Heart left ventricle (tissue), 16 donors: ENCODE measurements at regions of chr6 and their contacts with region 1.

Region 1: DNA sequence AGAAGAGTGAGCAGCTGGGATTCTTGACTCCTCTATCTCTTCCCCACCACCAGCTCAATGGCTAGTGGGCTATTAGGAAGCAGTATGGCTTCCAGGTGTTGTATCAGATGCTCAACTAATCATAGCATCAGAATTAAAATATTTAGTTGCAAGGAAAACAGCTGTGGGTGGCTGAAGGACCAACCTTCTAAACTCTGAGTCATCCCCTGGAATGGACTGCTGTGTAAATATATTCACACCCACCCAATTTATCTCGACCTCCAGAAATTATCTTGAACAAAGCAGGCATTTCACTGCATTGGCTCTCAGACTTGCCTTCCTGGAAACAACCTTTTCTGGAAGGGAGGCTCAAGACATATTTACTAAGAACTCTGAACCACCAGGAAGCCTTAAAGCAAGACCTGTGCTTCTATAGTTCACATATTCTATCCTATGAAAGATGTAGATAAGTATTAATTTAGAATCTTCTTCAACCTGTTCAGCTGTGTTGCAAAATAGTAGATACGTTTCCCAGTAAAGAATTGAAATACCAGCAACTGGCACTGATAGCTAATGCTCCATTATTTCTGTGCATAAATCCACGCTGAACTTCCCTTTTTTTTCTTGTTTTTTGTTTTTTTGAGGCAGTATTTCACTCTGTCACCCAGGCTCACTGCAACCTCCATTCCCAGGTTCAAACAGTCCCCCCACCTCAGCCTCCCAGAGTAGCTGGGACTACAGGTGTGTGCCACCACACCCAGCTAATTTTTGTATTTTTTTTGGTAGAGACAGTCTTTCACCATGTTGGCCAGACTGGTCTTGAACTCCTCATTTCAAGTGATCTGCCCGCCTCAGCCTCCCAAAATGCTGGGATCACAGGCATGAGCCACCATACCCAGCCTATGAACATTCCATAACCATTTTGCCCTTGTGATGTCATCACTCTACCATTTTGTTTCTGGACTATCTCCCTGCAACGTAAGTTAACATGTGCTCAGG is 56.9 kb upstream of the CD2AP start:
- DNase-seq: no peak
- ATAC-seq: peak in 1 of 4 donors; percentile 73
- H3K4me3 ChIP-seq: no peak overlapping the region
- H3K27ac ChIP-seq: peak overlapping the region in 2 of 12 donors; percentile 45 to 50
- H3K4me1 ChIP-seq: peaks cover 0 to 15% (median 4%) of the 10 kb centered on the region in 12 donors
- H3K27me3 ChIP-seq: no peaks in the 10 kb centered on the region
- CTCF ChIP-seq: no peak
- POLR2A ChIP-seq: no peak

Region 2: GRCh38 chr6:46263707-46264086 is 1157.0 kb before region 1 on chr6:
- intact Hi-C with region 1: no loop called
- DNase-seq: no peak
- ATAC-seq: peak in 2 of 4 donors; percentile 27 to 53
- H3K4me3 ChIP-seq: no peak overlapping the region
- H3K27ac ChIP-seq: peak overlapping the region in 5 of 12 donors; percentile 14 to 35 (median 19)
- H3K4me1 ChIP-seq: peaks cover 4 to 47% (median 19%) of the 10 kb centered on the region in 12 donors
- H3K27me3 ChIP-seq: no peaks in the 10 kb centered on the region
- CTCF ChIP-seq: no peak
- POLR2A ChIP-seq: no peak

Region 3: GRCh38 chr6:47780510-47781356 is 360.1 kb after region 1 on chr6:
- intact Hi-C with region 1: loop called in 5 of 10 experiments (anchors 2 to 5 kb)
- DNase-seq: peak in 2 of 5 donors; percentile 14 to 28
- ATAC-seq: peak in 3 of 4 donors; percentile 84 to 86 (median 86)
- H3K4me3 ChIP-seq: peak overlapping the region in 1 of 12 donors; percentile 19
- H3K27ac ChIP-seq: no peak overlapping the region
- H3K4me1 ChIP-seq: peaks cover 0 to 7% (median 3%) of the 10 kb centered on the region in 12 donors
- H3K27me3 ChIP-seq: no peaks in the 10 kb centered on the region
- CTCF ChIP-seq: peak; percentile 48 to 78 (median 63)
- POLR2A ChIP-seq: no peak